ENCODE measurements at regions of chr2 and their contacts with region 1.

Region 1: DNA sequence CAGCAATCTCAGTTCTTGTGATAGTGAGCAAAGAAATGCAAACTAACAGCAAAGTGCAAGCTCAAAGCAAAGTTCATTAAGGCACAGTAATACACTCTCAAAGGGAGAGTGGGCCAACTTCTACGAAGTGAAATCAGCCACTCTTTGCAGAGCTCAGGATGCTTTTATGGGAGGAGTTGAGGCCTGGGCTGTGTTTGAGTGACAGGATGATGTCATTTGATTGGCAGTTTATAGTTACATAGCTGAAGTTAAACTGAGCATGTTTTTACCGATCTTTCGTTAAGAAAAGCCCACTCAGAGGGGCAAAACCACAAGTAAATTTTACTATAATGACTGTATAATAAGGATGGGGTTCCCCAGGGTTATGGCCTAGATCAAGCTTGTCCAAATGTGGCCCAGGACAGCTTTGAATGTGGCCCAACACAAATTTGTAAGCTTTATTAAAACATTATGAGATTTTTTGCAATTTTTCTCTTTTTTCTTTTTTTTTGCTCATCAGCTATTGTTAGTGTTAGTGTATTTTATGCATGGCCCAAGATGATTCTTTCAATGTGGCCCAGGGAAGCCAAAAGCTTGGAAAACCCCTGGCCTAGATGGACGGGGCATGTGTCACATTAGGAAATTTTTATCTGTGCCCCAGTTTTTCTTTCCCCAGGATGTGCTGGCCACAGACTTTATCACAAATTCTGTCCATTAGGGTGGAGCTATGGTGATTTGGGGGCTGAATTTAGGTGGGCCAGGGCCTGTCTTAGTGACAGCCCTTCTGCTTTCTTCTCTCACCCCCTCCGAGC is 8.3 kb upstream of the DNAH7 start:
- DNase-seq: no peak
- ATAC-seq: no peak
- H3K4me3 ChIP-seq: no peak overlapping the region
- H3K4me3 Mint-ChIP-seq: no peak overlapping the region
- H3K27ac ChIP-seq: no peak overlapping the region
- H3K27ac Mint-ChIP-seq: no peak overlapping the region
- H3K4me1 ChIP-seq: peaks cover 9% of the 10 kb centered on the region
- H3K4me1 Mint-ChIP-seq: peaks cover 27% of the 10 kb centered on the region
- H3K27me3 ChIP-seq: no peaks in the 10 kb centered on the region
- H3K27me3 Mint-ChIP-seq: no peaks in the 10 kb centered on the region
- CTCF ChIP-seq: no peak

Region 2: GRCh38 chr2:195451160-195451559 is 625.8 kb before region 1 on chr2:
- CTCF ChIA-PET with region 1: no interaction called
- POLR2A ChIA-PET with region 1: no interaction called
- intact Hi-C with region 1: no loop called
- DNase-seq: no peak
- ATAC-seq: no peak
- H3K4me3 ChIP-seq: no peak overlapping the region
- H3K4me3 Mint-ChIP-seq: no peak overlapping the region
- H3K27ac ChIP-seq: no peak overlapping the region
- H3K27ac Mint-ChIP-seq: no peak overlapping the region
- H3K4me1 ChIP-seq: no peaks in the 10 kb centered on the region
- H3K4me1 Mint-ChIP-seq: no peaks in the 10 kb centered on the region
- H3K27me3 ChIP-seq: no peaks in the 10 kb centered on the region
- H3K27me3 Mint-ChIP-seq: no peaks in the 10 kb centered on the region
- CTCF ChIP-seq: no peak

Region 3: DNA sequence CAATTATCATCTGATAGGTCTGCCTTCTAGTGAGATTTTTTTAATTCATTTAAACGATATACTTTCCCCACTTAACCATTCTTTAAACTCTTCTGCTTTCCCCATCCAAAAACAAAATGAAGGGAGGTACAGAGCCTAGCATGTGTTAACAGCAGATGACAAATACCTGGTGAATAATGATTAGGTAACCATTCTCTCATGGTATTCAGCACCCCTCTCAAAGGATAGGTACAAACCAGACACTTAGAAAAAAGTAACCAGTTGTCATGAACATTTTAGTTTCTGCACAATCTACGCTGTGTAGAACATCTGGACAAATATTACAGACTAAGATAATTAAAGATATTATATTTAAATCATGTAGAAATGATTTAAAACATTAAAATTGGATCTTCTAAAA is 64.7 kb before region 1 on chr2:
- CTCF ChIA-PET with region 1: no interaction called
- POLR2A ChIA-PET with region 1: no interaction called
- intact Hi-C with region 1: no loop called
- DNase-seq: no peak
- ATAC-seq: no peak
- H3K4me3 ChIP-seq: no peak overlapping the region
- H3K4me3 Mint-ChIP-seq: no peak overlapping the region
- H3K27ac ChIP-seq: no peak overlapping the region
- H3K27ac Mint-ChIP-seq: no peak overlapping the region
- H3K4me1 ChIP-seq: no peaks in the 10 kb centered on the region
- H3K4me1 Mint-ChIP-seq: no peaks in the 10 kb centered on the region
- H3K27me3 ChIP-seq: peaks cover 0 to 3% of the 10 kb centered on the region in 2 experiments
- H3K27me3 Mint-ChIP-seq: peaks cover 14% of the 10 kb centered on the region
- CTCF ChIP-seq: no peak

Region 4: DNA sequence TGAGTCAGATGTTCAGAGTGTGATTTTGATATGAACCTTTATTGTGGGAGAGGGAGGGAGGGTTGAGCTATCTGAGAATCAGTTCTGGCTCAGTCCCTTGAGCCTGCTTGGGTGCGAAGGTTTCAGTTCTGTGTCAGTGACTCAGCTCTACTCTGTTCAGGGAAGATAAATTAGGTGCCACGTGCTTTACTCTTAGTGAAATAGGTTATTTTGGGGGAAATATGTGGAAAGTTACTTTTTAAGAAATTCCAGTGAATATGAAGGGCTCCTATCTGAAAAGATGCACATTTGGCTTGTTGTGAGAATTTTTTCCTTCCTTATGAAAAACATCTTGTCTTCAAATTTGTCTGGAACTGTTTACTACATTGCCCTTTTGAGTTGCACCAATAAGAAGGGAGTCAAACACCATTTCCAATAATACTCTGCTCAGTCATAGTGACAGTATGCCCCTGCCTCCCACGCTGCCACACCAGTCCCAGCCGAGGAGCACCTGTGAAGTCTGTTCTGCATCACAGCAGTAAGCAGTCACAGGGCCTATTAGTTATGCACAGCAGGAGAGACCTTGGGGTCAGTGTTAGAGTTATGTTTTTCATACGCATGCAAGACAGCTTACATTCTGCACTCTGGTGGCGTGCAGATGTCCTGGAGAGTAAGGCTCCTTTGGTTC is 24.5 kb after region 1 on chr2:
- CTCF ChIA-PET with region 1: no interaction called
- POLR2A ChIA-PET with region 1: no interaction called
- intact Hi-C with region 1: no loop called
- DNase-seq: peak in 1 of 14 experiments; percentile 8
- ATAC-seq: no peak
- H3K4me3 ChIP-seq: no peak overlapping the region
- H3K4me3 Mint-ChIP-seq: no peak overlapping the region
- H3K27ac ChIP-seq: no peak overlapping the region
- H3K27ac Mint-ChIP-seq: no peak overlapping the region
- H3K4me1 ChIP-seq: peaks cover 3% of the 10 kb centered on the region
- H3K4me1 Mint-ChIP-seq: peaks cover 38% of the 10 kb centered on the region
- H3K27me3 ChIP-seq: no peaks in the 10 kb centered on the region
- H3K27me3 Mint-ChIP-seq: no peaks in the 10 kb centered on the region
- CTCF ChIP-seq: no peak

Region 5: GRCh38 chr2:196125596-196125995 is 48.6 kb after region 1 on chr2:
- CTCF ChIA-PET with region 1: interaction called, 5 read pairs
- POLR2A ChIA-PET with region 1: no interaction called
- intact Hi-C with region 1: loop called in 1 of 2 experiments (anchors 5 kb)
- DNase-seq: no peak
- ATAC-seq: no peak
- H3K4me3 ChIP-seq: no peak overlapping the region
- H3K4me3 Mint-ChIP-seq: no peak overlapping the region
- H3K27ac ChIP-seq: no peak overlapping the region
- H3K27ac Mint-ChIP-seq: no peak overlapping the region
- H3K4me1 ChIP-seq: no peaks in the 10 kb centered on the region
- H3K4me1 Mint-ChIP-seq: no peaks in the 10 kb centered on the region
- H3K27me3 ChIP-seq: no peaks in the 10 kb centered on the region
- H3K27me3 Mint-ChIP-seq: no peaks in the 10 kb centered on the region
- CTCF ChIP-seq: no peak

Region 6: DNA sequence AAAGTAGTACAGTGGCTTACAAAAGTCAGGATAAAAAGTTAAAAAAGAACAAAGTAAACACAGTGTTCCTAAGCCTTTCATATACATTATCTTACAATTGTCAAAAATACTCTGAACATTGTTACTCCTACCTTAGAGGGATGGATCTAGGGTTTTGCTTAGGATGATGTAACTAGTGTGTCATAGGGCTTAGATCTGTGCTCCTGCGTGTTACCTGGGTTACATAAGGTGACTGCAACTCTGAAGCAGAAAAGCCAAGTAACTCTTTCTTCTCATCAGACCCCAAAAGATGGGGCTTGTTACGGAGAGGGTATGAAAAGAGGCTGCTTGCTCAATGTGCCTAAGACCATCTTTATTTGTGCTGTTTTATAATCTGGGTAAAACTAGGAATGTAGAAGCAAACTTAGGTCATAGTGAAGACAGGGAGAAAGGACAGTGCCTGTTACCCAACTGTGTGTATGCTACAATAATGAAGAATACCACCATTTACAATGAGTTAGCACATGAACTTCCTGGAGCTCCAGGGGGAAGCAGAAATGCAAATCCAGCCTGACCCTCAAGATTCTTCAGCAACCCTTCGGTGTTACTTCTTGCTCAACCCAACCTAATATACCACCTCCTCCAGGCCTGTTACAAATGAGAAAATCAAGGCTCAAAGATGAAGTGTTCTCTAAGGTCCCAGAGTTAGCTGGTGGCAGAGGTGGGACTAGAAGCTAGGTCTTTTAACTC is 136.4 kb after region 1 on chr2:
- CTCF ChIA-PET with region 1: interaction called, 3 read pairs
- POLR2A ChIA-PET with region 1: interaction called, 19 read pairs
- intact Hi-C with region 1: loop called in 1 of 2 experiments (anchors 2 kb)
- DNase-seq: peak in 2 of 14 experiments; percentile 66 to 73
- ATAC-seq: no peak
- H3K4me3 ChIP-seq: no peak overlapping the region
- H3K4me3 Mint-ChIP-seq: peak overlapping the region; percentile 26
- H3K27ac ChIP-seq: peak overlapping the region; percentile 6 to 15
- H3K27ac Mint-ChIP-seq: peak overlapping the region; percentile 95
- H3K4me1 ChIP-seq: peaks cover 45% of the 10 kb centered on the region
- H3K4me1 Mint-ChIP-seq: peaks cover 88% of the 10 kb centered on the region
- H3K27me3 ChIP-seq: no peaks in the 10 kb centered on the region
- H3K27me3 Mint-ChIP-seq: no peaks in the 10 kb centered on the region
- CTCF ChIP-seq: no peak

Region 7: DNA sequence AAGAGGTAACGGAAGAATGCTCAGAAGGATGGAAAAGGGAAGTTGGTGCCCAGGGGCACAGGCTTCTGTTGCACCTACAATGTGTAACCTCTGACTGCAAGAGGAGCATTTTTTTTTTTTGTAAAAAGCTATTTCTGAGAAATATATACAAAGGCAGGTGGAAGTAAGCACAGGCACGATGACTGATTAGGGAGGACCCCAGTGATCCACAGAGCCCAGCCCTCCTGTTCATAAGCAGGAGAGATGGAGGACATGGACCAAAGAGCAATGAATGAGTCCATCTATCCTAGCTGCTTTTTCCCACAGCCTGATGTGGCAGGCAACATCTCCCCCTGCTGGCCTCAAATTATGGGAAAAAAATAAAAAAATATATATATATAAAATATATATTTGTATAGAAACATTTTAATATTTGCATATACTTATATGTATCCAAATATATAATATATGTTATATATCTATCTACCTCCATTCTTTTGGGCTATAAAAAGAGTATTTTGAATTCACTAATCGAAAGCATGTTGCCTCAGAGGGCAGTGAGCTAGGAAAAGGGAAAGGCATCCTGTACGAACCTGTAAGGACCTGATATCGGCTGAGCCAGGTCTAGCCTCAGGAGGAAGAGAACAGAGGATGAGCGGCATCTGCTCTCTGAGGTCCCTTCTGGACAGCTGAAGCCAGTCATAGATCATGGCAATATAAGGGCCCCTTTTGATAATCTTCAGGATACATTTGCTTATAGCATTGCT is 260.4 kb after region 1 on chr2:
- CTCF ChIA-PET with region 1: interaction called, 26 read pairs
- POLR2A ChIA-PET with region 1: interaction called, 9 read pairs
- intact Hi-C with region 1: loop called (anchors 1 kb)
- DNase-seq: peak in 8 of 14 experiments; percentile 7 to 64 (median 27)
- ATAC-seq: peak; percentile 39
- H3K4me3 ChIP-seq: no peak overlapping the region
- H3K4me3 Mint-ChIP-seq: no peak overlapping the region
- H3K27ac ChIP-seq: no peak overlapping the region
- H3K27ac Mint-ChIP-seq: no peak overlapping the region
- H3K4me1 ChIP-seq: no peaks in the 10 kb centered on the region
- H3K4me1 Mint-ChIP-seq: no peaks in the 10 kb centered on the region
- H3K27me3 ChIP-seq: no peaks in the 10 kb centered on the region
- H3K27me3 Mint-ChIP-seq: no peaks in the 10 kb centered on the region
- CTCF ChIP-seq: peak; percentile 71

Region 8: DNA sequence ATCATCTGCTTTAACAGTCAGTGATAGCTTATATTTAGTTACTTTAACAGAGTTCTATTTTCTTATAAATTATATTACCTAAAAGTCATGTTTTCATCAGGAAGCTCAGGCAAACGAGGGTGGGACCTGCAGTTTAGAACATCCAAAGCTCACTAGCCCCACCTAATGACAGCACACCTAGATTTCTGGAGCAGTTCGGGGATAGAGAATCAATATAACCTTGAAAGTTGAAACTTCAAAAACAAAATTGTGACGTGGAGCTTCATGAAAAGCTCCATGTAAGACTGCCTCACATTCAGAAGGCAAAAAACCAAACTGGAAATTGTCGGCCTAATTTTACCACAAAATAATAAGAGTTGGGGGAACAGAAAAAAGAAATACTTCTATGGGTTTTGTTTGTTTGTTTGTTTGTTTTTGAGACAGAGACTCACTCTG is 376.7 kb after region 1 on chr2:
- CTCF ChIA-PET with region 1: interaction called, 11 read pairs
- POLR2A ChIA-PET with region 1: interaction called, 9 read pairs
- intact Hi-C with region 1: loop called (anchors 2 to 5 kb)
- DNase-seq: peak in 10 of 14 experiments; percentile 1 to 63 (median 22)
- ATAC-seq: no peak
- H3K4me3 ChIP-seq: no peak overlapping the region
- H3K4me3 Mint-ChIP-seq: no peak overlapping the region
- H3K27ac ChIP-seq: no peak overlapping the region
- H3K27ac Mint-ChIP-seq: no peak overlapping the region
- H3K4me1 ChIP-seq: no peaks in the 10 kb centered on the region
- H3K4me1 Mint-ChIP-seq: no peaks in the 10 kb centered on the region
- H3K27me3 ChIP-seq: peaks cover 0 to 12% of the 10 kb centered on the region in 2 experiments
- H3K27me3 Mint-ChIP-seq: peaks cover 31% of the 10 kb centered on the region
- CTCF ChIP-seq: peak; percentile 56

Region 9: GRCh38 chr2:196639180-196640030 is 562.4 kb after region 1 on chr2 and contains the start of gene CCDC150:
- CTCF ChIA-PET with region 1: no interaction called
- POLR2A ChIA-PET with region 1: no interaction called
- intact Hi-C with region 1: loop called in 1 of 2 experiments (anchors 10 kb)
- DNase-seq: peak; percentile 88 to 96 (median 92)
- ATAC-seq: peak; percentile 100
- H3K4me3 ChIP-seq: peak within 1 kb of the TSS; percentile 68
- H3K4me3 Mint-ChIP-seq: peak within 1 kb of the TSS; percentile 91
- H3K27ac ChIP-seq: no peak within 1 kb of the TSS
- H3K27ac Mint-ChIP-seq: peak within 1 kb of the TSS; percentile 40
- H3K4me1 ChIP-seq: peaks cover 12% of the 10 kb centered on the region
- H3K4me1 Mint-ChIP-seq: peaks cover 17% of the 10 kb centered on the region
- H3K27me3 ChIP-seq: no peaks in the 10 kb centered on the region
- H3K27me3 Mint-ChIP-seq: no peaks in the 10 kb centered on the region
- CTCF ChIP-seq: no peak
- total RNA-seq, gene CCDC150: 0.22 to 0.75 TPM